Activated CD8-positive, alpha-beta memory T cell treated with anti-CD3 and anti-CD28 coated beads, Interleukin-2, amount 10 ng/mL, durations not matched to agents 7 days and 5 days (primary cell): ENCODE measurements at regions of chr5 and their contacts with region 1.

Region 1: GRCh38 chr5:95646554-95647431 is at the start of gene RFESD:
- DNase-seq: peak; percentile 98
- ATAC-seq: peak; percentile 97
- H3K4me3 Mint-ChIP-seq: peak within 1 kb of the TSS; percentile 75
- H3K27ac Mint-ChIP-seq: peak within 1 kb of the TSS; percentile 88
- H3K4me1 Mint-ChIP-seq: peaks cover 42% of the 10 kb centered on the region
- H3K27me3 Mint-ChIP-seq: no peaks in the 10 kb centered on the region
- total RNA-seq, gene RFESD: 3.0 to 3.3 TPM

Region 2: DNA sequence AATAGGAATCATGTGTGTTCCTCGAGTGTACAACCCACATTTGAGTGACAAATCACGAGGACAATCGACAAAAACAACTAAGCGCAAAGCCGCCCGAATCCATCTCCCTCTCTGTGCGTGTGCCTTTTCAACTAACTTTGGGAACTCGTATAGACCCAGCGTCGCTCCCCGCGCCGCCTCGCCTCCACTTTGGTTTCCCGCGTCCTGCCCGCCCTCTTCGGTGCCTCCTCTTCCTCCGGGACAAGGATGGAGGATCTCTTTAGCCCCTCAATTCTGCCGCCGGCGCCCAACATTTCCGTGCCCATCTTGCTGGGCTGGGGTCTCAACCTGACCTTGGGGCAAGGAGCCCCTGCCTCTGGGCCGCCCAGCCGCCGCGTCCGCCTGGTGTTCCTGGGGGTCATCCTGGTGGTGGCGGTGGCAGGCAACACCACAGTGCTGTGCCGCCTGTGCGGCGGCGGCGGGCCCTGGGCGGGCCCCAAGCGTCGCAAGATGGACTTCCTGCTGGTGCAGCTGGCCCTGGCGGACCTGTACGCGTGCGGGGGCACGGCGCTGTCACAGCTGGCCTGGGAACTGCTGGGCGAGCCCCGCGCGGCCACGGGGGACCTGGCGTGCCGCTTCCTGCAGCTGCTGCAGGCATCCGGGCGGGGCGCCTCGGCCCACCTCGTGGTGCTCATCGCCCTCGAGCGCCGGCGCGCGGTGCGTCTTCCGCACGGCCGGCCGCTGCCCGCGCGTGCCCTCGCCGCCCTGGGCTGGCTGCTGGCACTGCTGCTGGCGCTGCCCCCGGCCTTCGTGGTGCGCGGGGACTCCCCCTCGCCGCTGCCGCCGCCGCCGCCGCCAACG is 26.5 kb before region 1 on chr5 and contains the start of gene GPR150:
- CTCF ChIA-PET with region 1: interaction called, 12 read pairs
- DNase-seq: peak; percentile 78
- ATAC-seq: peak; percentile 76
- H3K4me3 Mint-ChIP-seq: peak within 1 kb of the TSS; percentile 80
- H3K27ac Mint-ChIP-seq: peak within 1 kb of the TSS; percentile 67
- H3K4me1 Mint-ChIP-seq: peaks cover 35% of the 10 kb centered on the region
- H3K27me3 Mint-ChIP-seq: peaks cover 14% of the 10 kb centered on the region
- total RNA-seq, gene GPR150: 0.28 to 0.58 TPM

Region 3: GRCh38 chr5:95631991-95632675 is 14.7 kb before region 1 on chr5:
- CTCF ChIA-PET with region 1: interaction called, 16 read pairs
- DNase-seq: peak; percentile 85
- ATAC-seq: peak; percentile 100
- H3K4me3 Mint-ChIP-seq: no peak overlapping the region
- H3K27ac Mint-ChIP-seq: peak overlapping the region; percentile 83
- H3K4me1 Mint-ChIP-seq: peaks cover 15% of the 10 kb centered on the region
- H3K27me3 Mint-ChIP-seq: peaks cover 11% of the 10 kb centered on the region

Region 4: DNA sequence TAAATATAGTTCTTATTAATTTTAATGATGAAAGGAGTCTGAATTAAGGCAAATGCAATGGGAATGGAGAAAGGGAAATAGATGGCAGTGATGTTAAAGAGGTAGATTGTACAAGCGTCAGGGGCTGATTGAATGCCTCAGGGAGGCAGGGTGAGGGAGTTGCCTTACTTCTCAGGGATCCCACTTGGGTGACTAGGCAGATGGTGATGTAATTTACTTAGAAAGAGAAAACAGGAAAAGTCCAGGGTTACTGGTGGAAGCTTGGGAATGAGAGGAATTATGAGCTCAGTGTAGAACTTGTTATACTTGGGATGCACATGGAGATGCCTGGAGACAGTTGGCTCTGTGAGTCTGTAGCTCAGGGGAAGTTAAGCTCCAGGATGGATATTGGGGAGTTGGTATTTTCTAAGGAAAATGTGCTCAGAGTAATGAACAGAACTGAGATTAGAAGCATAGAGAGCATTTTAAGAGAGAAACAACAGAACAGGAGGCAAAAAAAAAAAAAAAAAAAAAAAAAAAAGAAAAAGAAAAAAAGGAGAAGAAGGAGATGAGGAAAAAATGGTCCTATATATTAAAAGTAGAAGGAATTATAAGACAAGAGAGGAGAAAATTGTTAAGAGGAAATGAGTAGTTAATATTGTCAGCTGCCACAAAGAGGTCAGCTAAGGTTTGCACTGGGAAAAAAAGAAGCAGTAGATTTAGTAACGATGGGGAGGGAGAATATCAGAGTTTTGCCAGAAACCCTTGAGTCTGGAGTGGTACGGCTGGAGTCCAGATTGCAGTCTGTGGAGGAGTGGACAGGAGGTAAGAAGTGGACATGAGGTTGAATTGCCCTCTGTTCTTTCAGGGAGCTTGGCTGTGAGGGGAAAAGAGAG is 402.8 kb after region 1 on chr5:
- CTCF ChIA-PET with region 1: no interaction called
- DNase-seq: no peak
- ATAC-seq: no peak
- H3K4me3 Mint-ChIP-seq: no peak overlapping the region
- H3K27ac Mint-ChIP-seq: no peak overlapping the region
- H3K4me1 Mint-ChIP-seq: peaks cover 4% of the 10 kb centered on the region
- H3K27me3 Mint-ChIP-seq: peaks cover 2% of the 10 kb centered on the region